Panc1 (cell line): ENCODE measurements at regions of chr18 and their contacts with region 1.

Region 1: GRCh38 chr18:11840493-11840892 is 10.7 kb upstream of the CHMP1B start:
- DNase-seq: no peak
- ATAC-seq: no peak
- H3K4me3 ChIP-seq: no peak overlapping the region
- H3K27ac ChIP-seq: no peak overlapping the region
- H3K4me1 ChIP-seq: no peaks in the 10 kb centered on the region
- H3K27me3 ChIP-seq: no peaks in the 10 kb centered on the region
- CTCF ChIP-seq: no peak

Region 2: DNA sequence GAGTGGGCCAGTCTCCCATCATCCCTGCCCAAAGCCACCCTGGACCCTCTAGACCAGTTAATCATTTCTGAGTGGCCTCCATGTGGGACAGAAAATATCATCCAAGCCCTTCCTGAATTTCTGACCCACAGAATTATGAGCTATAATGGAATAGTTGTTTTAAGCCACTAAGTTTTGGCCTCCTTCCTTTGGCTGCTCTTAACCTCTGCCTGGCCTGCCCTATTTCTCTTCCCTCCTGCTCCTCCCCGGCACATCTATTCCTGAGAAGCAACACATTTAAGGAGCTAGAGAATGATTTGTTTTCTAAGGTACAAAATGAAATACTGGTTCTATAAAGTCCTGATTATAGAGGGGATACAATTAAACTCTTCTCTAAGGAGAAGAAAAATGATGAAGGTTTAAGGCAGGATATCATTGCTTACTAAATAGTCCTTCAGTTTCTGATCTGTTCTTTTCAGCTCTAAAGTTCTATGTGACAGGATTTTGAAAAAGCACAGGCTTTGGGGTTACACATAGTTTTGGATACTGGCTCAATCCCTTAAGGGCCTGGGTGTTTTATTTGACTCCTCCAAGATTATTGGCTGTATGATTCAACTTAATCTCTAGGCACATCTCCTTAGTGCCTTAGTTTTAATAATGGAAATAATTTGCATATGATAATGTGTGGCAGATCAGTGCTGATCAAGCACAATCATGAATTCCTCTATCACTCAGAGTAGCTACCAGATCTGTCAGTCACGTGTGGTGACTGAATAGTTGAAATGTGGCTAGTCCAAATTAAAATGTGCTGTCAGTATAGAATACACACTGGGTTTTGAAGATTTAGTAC is 1686.4 kb before region 1 on chr18:
- CTCF ChIA-PET with region 1: no interaction called
- POLR2A ChIA-PET with region 1: no interaction called
- in situ Hi-C with region 1: no loop called
- intact Hi-C with region 1: no loop called
- DNase-seq: no peak
- ATAC-seq: no peak
- H3K4me3 ChIP-seq: no peak overlapping the region
- H3K27ac ChIP-seq: no peak overlapping the region
- H3K4me1 ChIP-seq: no peaks in the 10 kb centered on the region
- H3K27me3 ChIP-seq: no peaks in the 10 kb centered on the region; the same call in 1 of the 2 replicates
- CTCF ChIP-seq: no peak

Region 3: DNA sequence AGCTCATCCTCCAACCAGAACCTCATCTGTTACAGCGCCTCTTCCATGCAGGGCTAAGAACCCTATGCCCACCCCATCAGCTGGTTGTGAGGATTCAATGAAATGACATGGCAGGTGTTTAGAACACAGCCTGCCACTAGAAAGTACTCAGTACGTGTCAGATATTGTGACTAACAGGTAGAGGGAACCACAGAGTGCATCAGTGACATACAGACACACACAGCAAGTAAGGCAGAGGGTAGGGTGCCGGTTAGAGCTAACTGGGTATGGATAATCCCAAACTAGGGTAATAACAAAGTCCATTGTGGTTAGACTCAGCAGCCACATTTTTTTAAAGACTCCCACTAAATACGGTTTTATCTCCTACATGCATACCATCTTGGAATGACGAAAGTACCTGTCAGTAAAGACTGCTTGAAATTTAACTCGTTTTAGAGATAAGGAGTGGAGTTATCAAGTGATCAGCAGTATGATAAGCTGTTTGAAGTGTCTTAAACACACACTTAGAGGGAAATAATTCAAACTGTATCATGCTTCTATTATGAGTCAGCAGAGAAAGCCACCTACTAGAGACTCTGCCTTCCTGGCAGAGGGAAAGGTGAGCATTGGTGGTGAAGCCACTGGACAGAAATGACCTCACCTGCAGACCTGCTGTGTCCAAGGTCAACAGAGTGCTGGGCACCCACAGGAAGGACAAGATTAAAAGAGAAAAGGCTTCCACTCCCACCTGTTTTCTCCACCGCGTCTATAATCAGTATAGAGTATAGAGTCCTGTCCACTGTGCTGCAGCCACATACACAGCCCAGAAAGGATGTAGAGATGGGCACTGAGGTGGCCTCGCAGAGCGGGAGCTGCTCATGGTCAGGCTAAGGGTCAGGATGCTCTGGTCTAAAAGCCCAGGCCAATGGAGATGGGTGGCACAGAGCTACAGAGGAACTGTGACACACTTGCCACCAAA is 47.1 kb after region 1 on chr18:
- CTCF ChIA-PET with region 1: no interaction called
- POLR2A ChIA-PET with region 1: no interaction called
- in situ Hi-C with region 1: no loop called
- intact Hi-C with region 1: no loop called
- DNase-seq: no peak
- ATAC-seq: no peak
- H3K4me3 ChIP-seq: no peak overlapping the region
- H3K27ac ChIP-seq: no peak overlapping the region
- H3K4me1 ChIP-seq: no peaks in the 10 kb centered on the region
- H3K27me3 ChIP-seq: no peaks in the 10 kb centered on the region
- CTCF ChIP-seq: no peak

Region 4: DNA sequence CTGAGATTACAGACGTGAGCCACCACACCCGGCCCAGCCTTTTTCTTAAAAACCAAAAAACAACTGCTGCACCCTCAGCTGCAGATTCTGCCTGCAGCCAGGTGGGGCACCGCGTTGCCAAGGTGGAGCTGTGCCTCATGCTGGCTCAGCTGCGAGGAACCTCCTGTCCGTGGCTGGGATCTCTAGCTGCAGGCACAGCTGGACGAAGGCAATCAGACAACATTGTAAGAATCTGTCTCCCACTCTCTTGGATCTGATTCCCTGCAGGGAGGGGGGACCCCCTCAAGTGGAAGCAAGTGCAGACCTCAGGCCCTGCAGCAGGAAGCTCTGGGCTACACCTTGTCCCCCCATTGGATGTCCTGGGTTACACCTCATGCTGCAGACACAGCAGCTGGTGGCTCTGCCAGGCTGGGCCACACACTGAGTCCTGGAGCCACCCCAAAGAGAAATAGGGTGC is 437.8 kb after region 1 on chr18:
- CTCF ChIA-PET with region 1: interaction called, 13 read pairs
- POLR2A ChIA-PET with region 1: no interaction called
- in situ Hi-C with region 1: no loop called
- intact Hi-C with region 1: no loop called
- DNase-seq: no peak
- ATAC-seq: peak; percentile 57; the same call in 1 of the 2 replicates
- H3K4me3 ChIP-seq: no peak overlapping the region
- H3K27ac ChIP-seq: no peak overlapping the region
- H3K4me1 ChIP-seq: no peaks in the 10 kb centered on the region
- H3K27me3 ChIP-seq: no peaks in the 10 kb centered on the region
- CTCF ChIP-seq: peak; percentile 62